ENCODE measurements at regions of chr2 and their contacts with region 1.

Region 1: GRCh38 chr2:15577071-15577735 is 14.5 kb upstream of the DDX1 start:
- DNase-seq: peak; percentile 94
- ATAC-seq: peak; percentile 99
- H3K4me3 Mint-ChIP-seq: no peak overlapping the region
- H3K27ac Mint-ChIP-seq: no peak overlapping the region
- H3K4me1 Mint-ChIP-seq: no peaks in the 10 kb centered on the region
- H3K27me3 Mint-ChIP-seq: no peaks in the 10 kb centered on the region

Region 2: GRCh38 chr2:14903709-14904374 is 673.4 kb before region 1 on chr2:
- CTCF ChIA-PET with region 1: interaction called, 25 read pairs
- POLR2A ChIA-PET with region 1: no interaction called
- DNase-seq: peak; percentile 70
- ATAC-seq: peak; percentile 98
- H3K4me3 Mint-ChIP-seq: no peak overlapping the region
- H3K27ac Mint-ChIP-seq: no peak overlapping the region
- H3K4me1 Mint-ChIP-seq: no peaks in the 10 kb centered on the region
- H3K27me3 Mint-ChIP-seq: no peaks in the 10 kb centered on the region

Region 3: DNA sequence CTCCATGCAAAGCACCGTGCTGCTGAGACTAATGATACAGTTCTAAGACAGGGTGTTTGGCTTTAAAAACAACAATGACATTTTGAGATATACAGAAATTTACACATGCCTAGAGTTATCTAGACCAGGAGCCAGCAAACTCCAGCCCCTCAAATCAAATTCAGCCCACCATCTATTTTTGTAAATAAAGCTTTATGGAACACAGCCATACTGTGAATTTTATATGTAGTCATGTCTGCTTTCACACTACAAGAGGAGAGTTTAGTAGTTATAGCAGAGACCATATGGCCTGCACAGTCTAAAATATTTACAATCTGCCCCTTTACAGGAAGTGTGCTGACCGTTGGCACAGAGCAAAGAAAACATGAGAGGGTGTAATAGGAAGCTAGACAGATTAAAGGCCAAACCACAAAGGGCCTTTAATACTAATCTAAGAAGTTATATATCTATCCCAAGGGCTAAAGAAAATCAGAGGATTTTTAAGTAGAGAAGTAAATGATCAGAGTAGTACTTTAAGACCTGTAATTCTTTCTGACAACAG is 55.5 kb before region 1 on chr2:
- CTCF ChIA-PET with region 1: no interaction called
- POLR2A ChIA-PET with region 1: no interaction called
- DNase-seq: no peak
- ATAC-seq: no peak
- H3K4me3 Mint-ChIP-seq: no peak overlapping the region
- H3K27ac Mint-ChIP-seq: no peak overlapping the region
- H3K4me1 Mint-ChIP-seq: no peaks in the 10 kb centered on the region
- H3K27me3 Mint-ChIP-seq: no peaks in the 10 kb centered on the region

Region 4: GRCh38 chr2:15560988-15561573 is 16.1 kb before region 1 on chr2 and contains the start of gene NBAS:
- CTCF ChIA-PET with region 1: interaction called, 33 read pairs
- POLR2A ChIA-PET with region 1: interaction called, 4 read pairs
- DNase-seq: peak; percentile 87
- ATAC-seq: peak; percentile 88
- H3K4me3 Mint-ChIP-seq: peak within 1 kb of the TSS; percentile 99
- H3K27ac Mint-ChIP-seq: peak within 1 kb of the TSS; percentile 95
- H3K4me1 Mint-ChIP-seq: peaks cover 41% of the 10 kb centered on the region
- H3K27me3 Mint-ChIP-seq: peaks cover 4% of the 10 kb centered on the region
- total RNA-seq, gene NBAS: 28.2 to 31.8 TPM

Region 5: DNA sequence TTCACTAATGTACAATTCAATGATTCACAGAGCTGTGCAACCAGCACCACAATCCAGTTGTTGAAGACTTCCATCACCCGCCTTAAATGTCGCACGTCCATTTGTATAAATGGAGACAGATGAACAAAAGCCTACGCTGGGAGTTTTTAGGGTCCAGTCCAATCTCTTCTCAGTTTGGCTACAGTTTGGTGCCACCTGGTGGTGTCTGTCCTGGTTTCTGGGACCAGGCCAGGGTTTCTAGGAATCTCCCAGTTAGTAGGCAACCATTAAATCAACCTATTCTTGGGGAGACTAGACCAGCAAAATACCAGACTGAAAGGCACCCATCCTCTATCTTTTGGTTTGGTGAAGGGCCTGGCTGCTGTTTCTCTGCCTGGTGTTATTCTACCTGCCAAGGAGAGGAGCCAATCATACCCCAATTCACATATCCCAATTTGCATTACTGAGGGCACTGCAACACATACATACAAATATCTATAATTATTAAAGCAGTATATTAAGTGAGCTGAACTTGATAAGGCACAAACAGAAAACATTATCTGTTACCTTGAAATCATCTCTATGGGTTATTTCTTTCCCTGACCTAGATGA is 11.2 kb after region 1 on chr2:
- CTCF ChIA-PET with region 1: interaction called, 20 read pairs
- POLR2A ChIA-PET with region 1: no interaction called
- DNase-seq: peak; percentile 45
- ATAC-seq: no peak
- H3K4me3 Mint-ChIP-seq: no peak overlapping the region
- H3K27ac Mint-ChIP-seq: no peak overlapping the region
- H3K4me1 Mint-ChIP-seq: peaks cover 14% of the 10 kb centered on the region
- H3K27me3 Mint-ChIP-seq: no peaks in the 10 kb centered on the region

Region 6: GRCh38 chr2:15763106-15763821 is 186.1 kb after region 1 on chr2:
- CTCF ChIA-PET with region 1: no interaction called
- POLR2A ChIA-PET with region 1: no interaction called
- DNase-seq: no peak
- ATAC-seq: no peak
- H3K4me3 Mint-ChIP-seq: no peak overlapping the region
- H3K27ac Mint-ChIP-seq: no peak overlapping the region
- H3K4me1 Mint-ChIP-seq: no peaks in the 10 kb centered on the region
- H3K27me3 Mint-ChIP-seq: no peaks in the 10 kb centered on the region

Region 7: GRCh38 chr2:15835991-15836688 is 258.9 kb after region 1 on chr2:
- CTCF ChIA-PET with region 1: no interaction called
- POLR2A ChIA-PET with region 1: no interaction called
- DNase-seq: no peak
- ATAC-seq: no peak
- H3K4me3 Mint-ChIP-seq: no peak overlapping the region
- H3K27ac Mint-ChIP-seq: no peak overlapping the region
- H3K4me1 Mint-ChIP-seq: no peaks in the 10 kb centered on the region
- H3K27me3 Mint-ChIP-seq: no peaks in the 10 kb centered on the region